ENCODE measurements at regions of chr12 and their contacts with region 1.

Region 1: DNA sequence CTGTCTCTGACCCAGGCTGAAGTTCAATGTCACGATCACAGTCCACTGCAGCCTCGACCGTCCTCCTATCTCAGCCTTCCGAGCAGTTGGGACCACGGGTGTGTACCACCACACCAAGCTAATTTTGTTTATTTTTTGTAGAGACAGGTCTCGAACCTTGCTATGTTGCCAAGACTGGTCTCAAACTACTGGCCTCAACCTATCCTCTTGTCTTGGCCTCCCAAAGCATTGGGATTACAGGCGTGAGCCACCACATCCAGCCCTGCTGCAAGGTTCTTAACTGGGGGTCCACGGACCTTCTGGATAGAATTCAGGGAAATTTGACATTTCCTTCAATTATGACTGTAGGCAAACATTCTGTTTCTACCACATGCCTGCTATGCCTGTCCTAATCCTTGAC is 36.9 kb downstream of the ZCCHC8 start:
- DNase-seq: no peak
- H3K4me3 ChIP-seq: no peak overlapping the region
- H3K27ac ChIP-seq: peak overlapping the region; percentile 92
- H3K4me1 ChIP-seq: peaks cover 22% of the 10 kb centered on the region
- H3K27me3 ChIP-seq: no peaks in the 10 kb centered on the region
- CTCF ChIP-seq: no peak

Region 2: DNA sequence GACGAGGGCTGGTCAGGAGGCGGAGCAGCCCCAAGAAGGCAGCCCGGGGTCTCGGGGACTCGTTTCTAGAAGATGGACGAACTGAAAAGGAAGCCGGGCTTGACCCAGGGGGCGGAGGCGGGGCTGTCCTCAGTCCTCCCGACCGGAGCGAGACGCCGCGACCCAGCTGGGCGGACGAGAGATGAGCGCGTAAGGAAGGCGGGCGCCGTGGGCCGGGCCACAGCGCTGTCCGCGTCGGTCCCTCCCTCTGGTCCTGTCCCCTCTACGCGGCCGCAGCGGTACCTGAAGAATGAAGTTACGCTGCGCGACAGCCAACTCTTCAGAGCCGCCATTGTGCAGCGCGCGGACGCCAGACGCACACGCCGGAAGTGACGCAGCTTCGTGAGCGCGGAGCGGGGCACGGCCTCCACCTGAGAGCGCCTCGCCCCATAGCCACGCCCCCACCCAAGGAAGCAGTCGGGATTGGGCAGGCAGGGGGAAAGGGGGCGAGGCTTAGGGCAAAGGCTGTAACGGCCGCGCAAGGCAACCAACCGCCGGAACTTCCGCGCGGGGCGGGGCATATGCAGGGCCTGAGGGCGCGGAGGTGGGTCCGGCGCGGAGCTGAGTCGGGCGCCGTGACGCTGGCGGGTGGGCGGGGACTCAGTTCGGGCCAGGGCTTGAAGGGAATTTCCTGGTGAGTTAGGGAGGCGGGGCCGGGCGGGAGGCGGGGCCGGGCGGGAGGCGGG is 238.0 kb before region 1 on chr12 and contains the start of gene DIABLO:
- CTCF ChIA-PET with region 1: no interaction called
- dilution Hi-C with region 1: no loop called
- in situ Hi-C with region 1: no loop called
- intact Hi-C with region 1: loop called (anchors 1 kb)
- DNase-seq: peak; percentile 100
- H3K4me3 ChIP-seq: peak within 1 kb of the TSS; percentile 67 to 99 (median 97)
- H3K27ac ChIP-seq: peak within 1 kb of the TSS; percentile 95
- H3K4me1 ChIP-seq: peaks cover 21% of the 10 kb centered on the region
- H3K27me3 ChIP-seq: no peaks in the 10 kb centered on the region
- CTCF ChIP-seq: no peak
- total RNA-seq, gene DIABLO: 54.5 to 55.0 TPM

Region 3: DNA sequence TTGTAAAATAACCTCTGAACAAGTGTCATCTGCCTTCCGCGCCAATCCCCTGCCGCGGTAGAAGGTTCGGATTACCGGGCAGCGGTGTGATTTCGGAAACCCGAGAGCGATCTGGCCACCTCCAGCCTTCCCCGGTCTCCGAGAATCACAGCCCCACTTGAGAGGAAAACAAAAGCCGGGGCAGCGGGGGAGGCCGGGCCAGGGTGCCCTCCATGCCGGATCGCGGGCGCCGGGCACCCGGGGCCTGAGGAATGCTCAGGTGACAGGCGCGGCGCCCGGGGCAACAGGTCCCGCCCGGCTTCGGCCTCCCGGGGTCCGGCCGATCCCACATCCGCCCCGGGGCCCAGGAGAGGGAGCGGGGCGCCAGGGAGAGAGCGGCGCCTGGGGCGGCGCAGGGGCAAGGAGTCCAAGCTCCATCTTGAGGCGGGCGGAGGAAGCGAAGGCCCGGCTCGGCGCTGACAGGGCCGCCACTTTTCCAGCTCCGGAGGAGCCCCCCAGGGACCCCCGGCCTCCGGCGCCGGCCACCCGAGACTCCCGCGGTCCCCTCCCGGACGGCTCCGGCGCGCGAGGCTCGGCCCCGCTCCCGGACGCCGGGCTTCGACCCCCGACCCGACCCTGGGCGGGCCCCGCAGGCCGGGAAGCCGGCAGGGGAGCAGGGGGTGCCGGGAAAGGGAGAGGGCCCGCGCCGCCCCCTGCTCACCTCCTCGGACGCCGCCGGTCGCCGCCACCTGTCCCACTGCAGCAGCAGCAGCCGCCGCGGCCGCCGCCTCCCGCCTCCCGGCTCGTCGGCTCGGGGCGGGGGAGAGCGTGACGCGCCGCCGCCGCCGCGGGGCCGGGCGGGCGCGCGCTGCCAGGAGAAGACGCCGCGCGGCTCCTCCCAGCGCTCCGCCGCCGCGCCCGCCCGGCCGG is 41.7 kb before region 1 on chr12 and contains the start of gene CLIP1:
- CTCF ChIA-PET with region 1: no interaction called
- dilution Hi-C with region 1: no loop called
- in situ Hi-C with region 1: no loop called
- intact Hi-C with region 1: loop called (anchors 1 kb)
- DNase-seq: peak; percentile 68
- H3K4me3 ChIP-seq: peak within 1 kb of the TSS; percentile 70 to 79 (median 75)
- H3K27ac ChIP-seq: peak within 1 kb of the TSS; percentile 95
- H3K4me1 ChIP-seq: peaks cover 21% of the 10 kb centered on the region
- H3K27me3 ChIP-seq: no peaks in the 10 kb centered on the region
- CTCF ChIP-seq: peak in 1 of 2 donors; percentile 56
- total RNA-seq, gene CLIP1: 86.1 to 97.4 TPM

Measured in mammary epithelial cell (primary cell).